ENCODE measurements at regions of chr7 and their contacts with region 1.

Region 1: DNA sequence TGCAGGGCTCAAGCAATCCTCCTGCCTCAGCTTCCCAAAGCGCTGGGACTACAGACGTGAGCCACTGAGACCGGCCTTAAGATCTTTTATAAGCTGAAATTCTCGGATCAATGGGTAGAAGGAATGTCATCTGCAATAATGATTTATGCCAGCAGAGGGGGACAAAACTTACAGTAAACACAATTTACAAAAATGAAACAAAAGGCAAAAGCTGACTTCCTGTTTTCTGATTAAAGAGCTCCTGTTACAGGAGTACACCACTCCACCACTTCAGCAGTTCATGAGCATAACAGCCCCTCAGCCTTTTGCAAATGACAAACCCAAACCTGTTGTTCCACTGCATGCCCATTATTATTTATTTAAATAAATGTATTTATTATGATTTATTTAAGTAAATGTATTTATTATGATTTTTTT is 88.5 kb upstream of the ATP6V0A4 start:
- DNase-seq: peak; percentile 24
- H3K4me3 Mint-ChIP-seq: no peak overlapping the region
- H3K27ac Mint-ChIP-seq: peak overlapping the region; percentile 30
- H3K4me1 Mint-ChIP-seq: peaks cover 20% of the 10 kb centered on the region
- H3K27me3 Mint-ChIP-seq: peaks cover 2% of the 10 kb centered on the region

Region 2: GRCh38 chr7:138449580-138449979 is 436.9 kb before region 1 on chr7:
- intact Hi-C with region 1: no loop called
- DNase-seq: no peak
- H3K4me3 Mint-ChIP-seq: no peak overlapping the region
- H3K27ac Mint-ChIP-seq: no peak overlapping the region
- H3K4me1 Mint-ChIP-seq: no peaks in the 10 kb centered on the region
- H3K27me3 Mint-ChIP-seq: peaks cover 7% of the 10 kb centered on the region

Region 3: DNA sequence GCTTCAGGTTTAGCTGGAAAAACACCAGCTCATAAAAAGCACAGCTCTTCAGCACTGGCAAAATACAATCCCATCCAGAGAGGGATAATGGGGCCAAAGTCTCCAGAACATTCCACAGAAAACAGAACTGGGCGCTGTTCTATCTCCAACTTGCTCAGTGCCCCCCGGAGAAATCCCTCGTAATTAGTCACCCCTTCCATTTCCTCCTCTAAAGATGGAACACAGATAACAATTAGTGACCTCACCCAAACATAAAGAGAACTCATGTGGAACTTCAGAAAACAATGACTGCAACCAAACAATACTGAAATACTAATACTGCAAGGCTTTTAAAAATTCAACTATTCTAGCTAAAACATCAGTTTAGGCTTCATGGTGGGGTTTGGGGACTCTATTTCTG is 48.4 kb after region 1 on chr7:
- intact Hi-C with region 1: loop called (anchors 5 kb)
- DNase-seq: no peak
- H3K4me3 Mint-ChIP-seq: no peak overlapping the region
- H3K27ac Mint-ChIP-seq: no peak overlapping the region
- H3K4me1 Mint-ChIP-seq: peaks cover 1% of the 10 kb centered on the region
- H3K27me3 Mint-ChIP-seq: peaks cover 21% of the 10 kb centered on the region

Region 4: DNA sequence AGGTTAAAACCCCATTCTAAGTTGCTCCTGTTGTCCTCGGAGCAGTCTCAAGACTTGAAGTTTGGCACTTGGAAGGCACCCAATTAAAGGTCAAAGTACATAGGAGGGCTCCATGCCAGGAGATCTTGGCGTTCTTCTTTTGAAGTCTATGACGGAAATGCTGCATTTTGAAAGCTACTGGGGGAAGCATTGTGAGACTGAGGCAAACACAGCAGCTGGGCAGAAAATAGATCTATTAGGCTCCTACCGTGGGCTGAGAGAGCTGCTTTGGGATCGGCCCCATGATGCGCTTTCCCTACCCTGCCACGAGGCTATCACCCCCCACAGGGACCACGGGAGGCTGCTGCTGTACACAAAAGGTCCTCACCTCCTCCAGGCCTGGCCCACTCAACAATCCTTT is 74.7 kb after region 1 on chr7:
- intact Hi-C with region 1: no loop called
- DNase-seq: no peak
- H3K4me3 Mint-ChIP-seq: no peak overlapping the region
- H3K27ac Mint-ChIP-seq: no peak overlapping the region
- H3K4me1 Mint-ChIP-seq: peaks cover 9% of the 10 kb centered on the region
- H3K27me3 Mint-ChIP-seq: peaks cover 24% of the 10 kb centered on the region

Region 5: GRCh38 chr7:138981332-138982203 is 95.1 kb after region 1 on chr7 and contains the start of gene KIAA1549:
- intact Hi-C with region 1: loop called (anchors 2 kb)
- DNase-seq: peak; percentile 41
- H3K4me3 Mint-ChIP-seq: peak within 1 kb of the TSS; percentile 81
- H3K27ac Mint-ChIP-seq: peak within 1 kb of the TSS; percentile 47
- H3K4me1 Mint-ChIP-seq: peaks cover 15% of the 10 kb centered on the region
- H3K27me3 Mint-ChIP-seq: peaks cover 61% of the 10 kb centered on the region
- total RNA-seq, gene KIAA1549: 1.3 TPM in 2 replicates